K562 (cell line): ENCODE measurements at regions of chr1 and their contacts with region 1.

Region 1: GRCh38 chr1:51990478-51990965 is at the start of gene RAB3B:
- DNase-seq: peak; percentile 88 to 96 (median 94)
- ATAC-seq: peak; percentile 100
- H3K4me3 ChIP-seq: peak within 1 kb of the TSS; percentile 50
- H3K27ac ChIP-seq: no peak within 1 kb of the TSS
- H3K4me1 ChIP-seq: peaks cover 0 to 11% of the 10 kb centered on the region in 2 experiments; a peak in 3 of 5 replicates
- H3K27me3 ChIP-seq: peaks cover 20 to 47% of the 10 kb centered on the region in 2 experiments
- CTCF ChIP-seq: 0 out of 6 replicates have a peak, but pooled peaks of 1 of the 3 experiments have one; percentile 9
- EP300 ChIP-seq: no peak
- POLR2A ChIP-seq: no peak
- RAD21 ChIP-seq: no peak
- polyA plus RNA-seq, gene RAB3B: 0.13 to 0.14 TPM

Region 2: GRCh38 chr1:51936531-51936930 is 54.0 kb before region 1 on chr1:
- CTCF ChIA-PET with region 1: no interaction called
- POLR2A ChIA-PET with region 1: interaction called, 3 read pairs
- in situ Hi-C with region 1: loop called (anchors 10 kb)
- intact Hi-C with region 1: no loop called
- DNase-seq: peak in 1 of 4 experiments; percentile 39
- ATAC-seq: peak; percentile 86
- H3K4me3 ChIP-seq: no peak overlapping the region
- H3K27ac ChIP-seq: no peak overlapping the region
- H3K4me1 ChIP-seq: no peaks in the 10 kb centered on the region
- H3K27me3 ChIP-seq: no peaks in the 10 kb centered on the region
- CTCF ChIP-seq: peak; percentile 40 to 43 (median 43)
- EP300 ChIP-seq: no peak
- POLR2A ChIP-seq: no peak
- RAD21 ChIP-seq: peak in 1 of 2 experiments; percentile 41; a peak in 2 of 4 replicates